Activated T-helper 1 cell treated with anti-CD3 and anti-CD28 coated beads, Interleukin-12 subunit alpha, Interleukin-12 subunit beta, Interleukin-2, Interleukin-4 antibody, amounts not matched to agents 30 ng/mL and 10 ng/mL and 1 ng/mL, durations not matched to agents 14 hours and 24 hours and 36 hours (primary cell): ENCODE measurements at regions of chr5 and their contacts with region 1.

Region 1: DNA sequence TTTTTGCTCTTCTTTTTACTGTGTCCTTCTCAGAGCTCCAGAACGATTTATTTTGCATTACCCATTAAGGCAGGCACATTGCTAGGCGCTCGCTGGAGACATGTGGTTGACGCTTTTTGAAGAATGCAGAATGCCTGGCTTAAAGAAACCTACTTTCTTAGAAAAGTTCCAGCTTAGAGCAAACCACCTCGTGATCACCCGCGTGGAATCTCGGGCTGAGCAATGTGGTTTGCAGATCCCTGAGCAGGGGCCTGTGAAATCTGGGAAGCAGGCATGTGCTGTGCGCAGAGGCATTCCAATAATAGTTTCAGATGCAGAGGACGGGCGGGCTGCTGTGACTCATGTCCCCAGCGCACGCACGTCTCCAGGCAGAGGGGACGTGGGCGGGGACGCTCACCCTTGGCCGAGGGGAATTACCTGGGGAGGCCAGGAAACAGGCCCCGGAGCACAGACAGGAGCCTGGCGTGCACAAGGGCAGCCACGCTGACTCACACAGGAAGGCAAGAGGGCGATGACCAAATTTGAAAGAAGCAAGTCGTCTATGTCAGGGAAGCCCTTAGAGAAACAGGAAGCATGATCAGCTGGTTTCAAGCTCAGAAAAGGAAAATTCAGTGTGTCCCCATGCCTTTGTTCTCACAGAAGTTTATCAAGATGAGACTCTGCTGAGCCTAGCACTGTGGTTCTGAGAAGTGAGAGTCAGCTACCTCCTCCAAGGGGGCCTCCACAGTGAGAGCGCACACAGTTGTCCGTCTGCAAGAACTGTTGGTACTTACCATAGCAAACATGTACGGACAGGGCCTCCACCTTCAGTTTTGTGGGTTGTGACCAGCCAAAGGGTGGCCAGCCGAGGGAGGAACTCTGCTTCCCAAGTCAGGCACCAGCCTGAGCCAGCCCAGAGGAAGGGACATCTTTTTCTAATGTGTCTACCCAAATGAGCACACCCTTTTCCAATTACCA is 218.6 kb downstream of the PIK3R1 start:
- DNase-seq: peak; percentile 88
- H3K4me3 Mint-ChIP-seq: peak overlapping the region; percentile 16
- H3K27ac Mint-ChIP-seq: peak overlapping the region; percentile 88
- H3K4me1 Mint-ChIP-seq: peaks cover 53% of the 10 kb centered on the region
- H3K27me3 Mint-ChIP-seq: peaks cover 30% of the 10 kb centered on the region

Region 2: GRCh38 chr5:66821688-66822429 is 1612.3 kb before region 1 on chr5:
- intact Hi-C with region 1: loop called (anchors 5 kb)
- DNase-seq: peak; percentile 56
- H3K4me3 Mint-ChIP-seq: peak overlapping the region; percentile 74
- H3K27ac Mint-ChIP-seq: peak overlapping the region; percentile 93
- H3K4me1 Mint-ChIP-seq: peaks cover 83% of the 10 kb centered on the region
- H3K27me3 Mint-ChIP-seq: no peaks in the 10 kb centered on the region

Region 3: GRCh38 chr5:68054638-68055037 is 379.6 kb before region 1 on chr5:
- intact Hi-C with region 1: no loop called
- DNase-seq: no peak
- H3K4me3 Mint-ChIP-seq: no peak overlapping the region
- H3K27ac Mint-ChIP-seq: no peak overlapping the region
- H3K4me1 Mint-ChIP-seq: no peaks in the 10 kb centered on the region
- H3K27me3 Mint-ChIP-seq: no peaks in the 10 kb centered on the region

Region 4: DNA sequence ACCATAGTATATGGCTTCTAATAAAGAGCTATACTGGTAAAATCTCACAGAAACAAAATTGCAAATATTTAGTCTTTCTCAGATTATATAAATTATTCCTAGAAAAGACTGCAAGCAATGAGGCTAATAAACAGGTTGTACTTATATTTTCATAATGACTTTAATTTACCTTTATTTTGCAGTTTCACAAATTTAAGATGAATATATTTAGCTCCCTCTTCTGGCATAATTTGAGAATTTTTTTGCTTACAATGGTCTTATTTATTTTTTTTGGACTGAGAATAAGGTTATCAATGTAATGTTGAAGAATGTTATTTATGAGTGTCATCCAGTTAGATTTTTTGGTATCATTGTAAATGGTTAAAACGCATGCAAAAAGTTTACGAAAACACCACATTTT is 161.9 kb before region 1 on chr5:
- intact Hi-C with region 1: no loop called
- DNase-seq: no peak
- H3K4me3 Mint-ChIP-seq: no peak overlapping the region
- H3K27ac Mint-ChIP-seq: no peak overlapping the region
- H3K4me1 Mint-ChIP-seq: peaks cover 81% of the 10 kb centered on the region
- H3K27me3 Mint-ChIP-seq: no peaks in the 10 kb centered on the region

Region 5: GRCh38 chr5:68343421-68343826 is 90.8 kb before region 1 on chr5:
- intact Hi-C with region 1: loop called (anchors 1 kb)
- DNase-seq: peak; percentile 6
- H3K4me3 Mint-ChIP-seq: no peak overlapping the region
- H3K27ac Mint-ChIP-seq: no peak overlapping the region
- H3K4me1 Mint-ChIP-seq: peaks cover 38% of the 10 kb centered on the region
- H3K27me3 Mint-ChIP-seq: peaks cover 7% of the 10 kb centered on the region

Region 6: GRCh38 chr5:68378204-68378824 is 55.9 kb before region 1 on chr5:
- intact Hi-C with region 1: loop called (anchors 1 kb)
- DNase-seq: no peak
- H3K4me3 Mint-ChIP-seq: no peak overlapping the region
- H3K27ac Mint-ChIP-seq: peak overlapping the region; percentile 14
- H3K4me1 Mint-ChIP-seq: peaks cover 58% of the 10 kb centered on the region
- H3K27me3 Mint-ChIP-seq: no peaks in the 10 kb centered on the region

Region 7: DNA sequence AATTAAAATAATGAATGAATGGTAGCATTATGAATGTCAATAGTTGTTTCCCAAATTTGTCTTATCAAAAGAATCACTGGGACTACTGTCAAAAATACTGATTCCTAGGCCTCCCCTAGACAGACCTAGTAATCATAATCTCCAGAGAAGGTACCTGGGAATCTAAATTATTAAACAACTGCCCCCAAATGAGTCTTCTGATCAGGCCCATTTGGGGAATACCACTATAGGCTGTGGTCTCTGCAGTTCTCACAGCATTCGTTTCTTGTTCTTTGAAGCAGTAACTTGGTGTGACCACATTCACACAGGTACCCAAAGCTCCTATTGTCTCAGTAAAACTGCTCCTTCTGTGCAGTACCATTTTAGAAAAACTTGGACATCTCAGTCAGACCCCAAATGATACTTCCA is 12.3 kb after region 1 on chr5:
- intact Hi-C with region 1: no loop called
- DNase-seq: no peak
- H3K4me3 Mint-ChIP-seq: no peak overlapping the region
- H3K27ac Mint-ChIP-seq: no peak overlapping the region
- H3K4me1 Mint-ChIP-seq: peaks cover 18% of the 10 kb centered on the region
- H3K27me3 Mint-ChIP-seq: peaks cover 4% of the 10 kb centered on the region

Region 8: DNA sequence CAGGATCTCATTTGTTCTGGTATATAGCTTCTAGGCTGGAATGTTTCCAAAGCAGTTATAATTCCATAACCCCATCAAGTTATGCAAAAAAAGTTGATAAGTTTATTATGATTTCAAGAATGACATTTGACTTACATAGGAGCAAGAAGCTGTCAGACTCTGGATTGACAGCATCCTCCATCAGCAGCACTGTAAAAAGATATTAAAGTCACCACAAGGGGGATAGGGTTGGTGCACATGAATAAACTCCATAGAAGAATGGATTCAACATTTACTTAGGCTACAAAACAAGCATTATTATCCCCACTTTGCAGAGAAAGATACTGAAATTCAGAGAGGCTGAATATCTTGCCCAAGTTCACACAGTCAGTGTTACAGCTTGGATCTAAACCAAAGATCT is 450.7 kb after region 1 on chr5:
- intact Hi-C with region 1: loop called (anchors 10 kb)
- DNase-seq: no peak
- H3K4me3 Mint-ChIP-seq: no peak overlapping the region
- H3K27ac Mint-ChIP-seq: no peak overlapping the region
- H3K4me1 Mint-ChIP-seq: peaks cover 27% of the 10 kb centered on the region
- H3K27me3 Mint-ChIP-seq: no peaks in the 10 kb centered on the region